ENCODE measurements at regions of chr13 and their contacts with region 1.

Region 1: DNA sequence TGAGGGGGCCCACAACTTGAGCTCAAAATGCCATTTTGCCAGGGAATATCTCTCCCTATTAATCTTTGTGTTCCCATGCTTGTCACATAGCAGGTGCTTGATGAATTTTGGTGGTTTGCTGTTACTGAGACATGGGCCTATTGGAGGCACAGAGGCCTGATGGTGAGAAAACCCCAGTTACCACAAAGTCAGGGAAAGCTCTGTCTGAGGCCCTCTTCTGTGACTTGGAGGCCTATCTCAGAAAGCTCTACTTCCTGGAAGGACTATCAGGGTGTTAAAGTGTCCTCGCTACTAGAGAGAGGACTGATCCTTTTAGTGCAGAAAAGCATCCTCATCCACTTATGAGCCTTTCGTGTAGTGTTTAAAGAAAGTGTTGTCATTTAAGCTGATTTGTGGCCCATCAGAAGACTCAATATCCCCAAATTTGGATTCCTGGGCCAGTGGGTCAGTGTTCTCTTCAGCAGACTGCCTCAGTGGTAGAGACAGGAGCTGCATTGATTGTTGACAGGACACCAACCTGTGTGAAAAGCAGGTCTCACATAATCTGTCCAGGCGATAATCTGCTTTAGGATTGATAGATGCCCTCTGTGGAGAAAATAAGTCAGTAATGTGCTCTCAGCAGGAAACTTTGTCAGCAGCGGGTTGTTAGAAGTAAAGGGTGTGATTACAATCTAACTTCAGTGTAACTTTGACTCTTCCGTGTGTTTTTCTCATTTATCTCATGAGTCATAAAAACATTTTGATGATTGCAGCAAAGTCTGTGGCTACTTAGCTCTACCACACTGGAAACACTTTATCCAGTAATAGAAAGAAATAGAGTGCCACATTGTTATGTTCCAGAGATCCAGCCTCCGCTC is 121.0 kb downstream of the AKAP11 start:
- DNase-seq: peak; percentile 80
- ATAC-seq: peak; percentile 65
- H3K4me3 Mint-ChIP-seq: peak overlapping the region; percentile 60
- H3K27ac Mint-ChIP-seq: peak overlapping the region; percentile 94
- H3K4me1 Mint-ChIP-seq: peaks cover 82% of the 10 kb centered on the region
- H3K27me3 Mint-ChIP-seq: no peaks in the 10 kb centered on the region

Region 2: DNA sequence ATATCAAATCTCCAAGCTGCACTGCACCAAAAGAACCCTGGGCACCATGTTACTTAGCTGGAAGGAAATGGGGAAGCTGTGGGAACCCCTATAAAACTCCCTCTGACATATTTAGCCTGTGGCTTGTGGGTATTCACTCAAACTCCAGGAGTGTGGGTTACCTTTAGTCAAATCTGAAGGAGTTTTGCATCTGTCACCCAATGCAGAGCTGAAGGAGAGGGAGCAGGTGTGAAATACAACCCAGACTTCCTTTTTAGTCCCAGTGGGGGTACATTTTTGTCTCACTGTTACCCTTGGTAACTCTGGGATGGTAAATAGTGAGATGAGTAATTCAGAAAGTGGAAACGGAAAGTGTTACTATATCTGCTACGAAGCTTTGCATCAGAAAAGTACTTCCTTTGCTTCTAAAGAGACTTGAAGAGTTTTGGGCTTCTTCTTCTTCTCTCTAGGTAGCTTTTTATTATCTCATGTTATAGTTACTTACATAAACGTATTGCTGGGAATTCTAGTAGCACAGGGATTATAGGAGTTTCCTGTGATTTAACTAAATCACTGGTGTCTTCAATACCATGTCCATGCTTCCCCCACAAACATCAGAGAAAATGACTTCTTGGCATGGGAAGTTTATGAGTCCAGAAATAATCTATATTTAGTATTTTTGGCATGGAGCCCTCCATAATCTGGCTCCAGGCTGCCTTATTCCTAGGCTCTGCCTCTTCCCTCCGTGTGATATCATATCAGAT is 15.1 kb before region 1 on chr13:
- CTCF ChIA-PET with region 1: interaction called, 44 read pairs
- DNase-seq: peak; percentile 71
- ATAC-seq: peak; percentile 80
- H3K4me3 Mint-ChIP-seq: peak overlapping the region; percentile 21
- H3K27ac Mint-ChIP-seq: peak overlapping the region; percentile 93
- H3K4me1 Mint-ChIP-seq: peaks cover 64% of the 10 kb centered on the region
- H3K27me3 Mint-ChIP-seq: no peaks in the 10 kb centered on the region

Region 3: DNA sequence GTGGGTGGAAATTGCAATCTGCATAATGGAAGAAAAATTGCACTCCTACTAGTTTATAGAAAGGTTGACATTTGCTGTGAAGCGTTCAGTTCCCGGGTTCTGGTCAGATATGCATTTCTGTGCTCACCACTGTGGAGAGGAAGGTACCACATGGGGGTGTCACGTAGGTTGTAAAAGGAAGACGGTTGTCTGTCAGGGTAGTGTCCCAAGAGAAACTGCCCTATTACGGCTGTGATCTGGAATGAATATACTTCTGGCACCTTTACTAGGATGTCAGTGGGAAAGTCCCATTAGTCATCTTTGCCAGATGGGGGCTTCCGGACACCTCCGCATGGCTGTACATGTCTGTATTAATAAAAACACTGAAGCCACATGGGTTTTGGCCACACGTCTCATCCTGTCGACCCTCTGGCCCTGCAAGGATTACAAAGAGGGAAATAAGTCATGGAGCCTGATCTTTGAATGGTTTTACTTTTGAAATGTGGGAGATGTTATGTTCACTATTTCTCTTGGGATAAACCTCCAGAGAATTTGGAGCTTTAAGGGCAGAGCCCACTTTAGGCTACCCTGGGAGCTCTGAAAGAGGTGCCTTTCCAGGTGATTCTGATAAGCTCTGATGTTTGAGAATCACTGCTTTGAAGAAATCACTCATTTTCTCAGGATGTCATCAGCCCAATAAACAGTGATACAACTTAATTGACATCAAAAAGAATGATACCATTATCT is 12.9 kb after region 1 on chr13:
- CTCF ChIA-PET with region 1: interaction called, 14 read pairs
- DNase-seq: peak; percentile 85
- ATAC-seq: peak; percentile 80
- H3K4me3 Mint-ChIP-seq: peak overlapping the region; percentile 52
- H3K27ac Mint-ChIP-seq: peak overlapping the region; percentile 89
- H3K4me1 Mint-ChIP-seq: peaks cover 41% of the 10 kb centered on the region
- H3K27me3 Mint-ChIP-seq: no peaks in the 10 kb centered on the region

Measured in activated CD8-positive, alpha-beta memory T cell treated with anti-CD3 and anti-CD28 coated beads, Interleukin-2, amount 10 ng/mL, durations not matched to agents 7 days and 5 days (primary cell).